Cardiac septum (tissue), 1 donor: ENCODE measurements at regions of chr3 and their contacts with region 1.

Region 1: DNA sequence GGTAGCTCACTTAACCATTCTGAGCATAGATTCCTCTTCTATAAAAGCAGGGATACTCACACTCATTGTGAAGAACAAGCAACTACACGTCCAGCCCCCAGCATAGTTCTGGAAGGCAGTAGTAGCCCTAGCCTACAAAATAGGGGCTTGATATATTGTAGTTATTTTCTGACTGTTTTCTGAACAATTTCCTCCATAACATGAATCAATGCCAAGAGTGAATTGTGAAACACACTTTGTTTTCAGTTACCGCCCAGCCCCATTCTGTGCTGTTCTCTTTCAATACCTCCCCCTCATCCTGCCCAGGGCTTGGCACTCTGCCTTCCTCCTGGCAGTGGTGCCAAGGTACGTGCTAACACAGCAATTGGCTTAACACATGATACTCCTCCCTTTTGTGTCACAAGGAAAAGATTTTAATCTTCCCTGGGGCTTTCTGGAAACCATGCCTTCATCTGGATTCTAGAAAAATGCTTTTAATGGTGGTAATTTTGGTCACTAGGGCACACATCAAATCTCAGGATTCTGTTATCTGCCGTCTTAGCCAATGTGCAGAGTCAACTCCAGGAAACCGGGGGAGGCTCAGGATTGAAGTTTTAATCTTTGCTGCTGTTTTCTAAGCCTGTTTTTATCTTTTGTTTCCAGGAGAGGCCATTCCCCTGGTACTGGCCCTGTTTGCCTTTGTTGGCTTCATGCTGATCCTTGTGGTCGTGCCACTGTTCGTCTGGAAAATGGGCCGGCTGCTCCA is 37.2 kb downstream of the IL20RB start:
- DNase-seq: peak; percentile 84

Region 2: GRCh38 chr3:136802481-136802996 is 192.4 kb before region 1 on chr3:
- intact Hi-C with region 1: loop called (anchors 1 kb)
- DNase-seq: no peak

Region 3: DNA sequence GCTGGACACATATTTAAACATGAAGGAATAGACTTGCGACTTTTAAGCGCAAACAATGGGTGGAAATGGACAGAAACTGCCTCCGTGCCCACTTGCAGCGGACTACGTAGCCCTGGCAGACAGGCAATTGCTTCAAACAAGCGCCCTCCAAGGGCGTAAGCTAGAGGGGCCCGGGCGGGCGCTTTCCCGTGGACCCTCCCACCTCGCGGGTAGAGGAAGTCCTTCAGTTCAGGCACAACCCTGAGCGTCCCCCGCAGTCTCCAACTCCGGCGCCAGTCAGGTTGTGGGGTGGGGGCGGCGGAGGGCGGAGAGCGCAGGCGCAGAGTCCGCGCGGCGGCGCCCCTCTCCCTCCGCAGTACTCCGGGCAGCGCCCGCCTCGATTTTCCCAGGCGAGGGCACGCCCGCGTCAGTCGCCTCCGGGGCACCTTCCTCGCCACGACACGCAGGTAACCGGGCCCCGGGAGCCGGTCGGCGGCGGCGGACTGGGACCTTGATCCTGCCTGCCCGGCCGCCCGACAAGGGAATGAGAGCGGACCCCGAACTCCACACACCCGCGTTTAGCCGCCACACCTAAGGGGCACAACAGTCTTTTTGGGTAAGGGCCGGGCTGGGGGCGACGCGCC is 176.1 kb before region 1 on chr3 and contains the start of gene SLC35G2:
- intact Hi-C with region 1: loop called (anchors 5 kb)
- DNase-seq: peak; percentile 82
- total RNA-seq, gene SLC35G2: 4.7 TPM

Region 4: GRCh38 chr3:136861890-136862616 is 132.9 kb before region 1 on chr3 and contains the start of gene NCK1:
- intact Hi-C with region 1: loop called (anchors 10 kb)
- DNase-seq: peak; percentile 99
- total RNA-seq, gene NCK1: 22.1 TPM

Region 5: GRCh38 chr3:136929984-136930670 is 64.8 kb before region 1 on chr3:
- intact Hi-C with region 1: loop called (anchors 2 kb)
- DNase-seq: peak; percentile 81

Region 6: DNA sequence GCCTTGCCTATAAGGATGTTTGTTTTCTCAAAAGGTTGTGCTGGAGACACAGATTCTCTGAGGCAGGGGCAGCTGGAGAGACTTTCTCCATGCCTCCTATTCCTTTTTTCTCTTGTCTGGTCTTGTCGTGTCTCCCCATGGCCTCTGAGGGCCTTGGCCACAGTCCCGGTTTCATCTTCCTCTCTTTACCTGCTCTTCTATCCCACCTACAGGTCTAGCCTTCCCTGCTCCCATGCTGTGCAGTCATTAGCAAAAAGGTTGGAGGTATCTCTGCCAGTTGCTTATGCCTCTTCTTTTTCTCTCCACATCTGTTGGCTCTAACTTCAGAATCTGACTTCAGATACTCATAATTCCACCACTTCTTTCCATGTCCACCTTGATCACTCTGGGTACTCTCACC is 154.0 kb after region 1 on chr3:
- intact Hi-C with region 1: no loop called
- DNase-seq: no peak